Natural killer cell (primary cell): ENCODE measurements at regions of chr7 and their contacts with region 1.

Region 1: DNA sequence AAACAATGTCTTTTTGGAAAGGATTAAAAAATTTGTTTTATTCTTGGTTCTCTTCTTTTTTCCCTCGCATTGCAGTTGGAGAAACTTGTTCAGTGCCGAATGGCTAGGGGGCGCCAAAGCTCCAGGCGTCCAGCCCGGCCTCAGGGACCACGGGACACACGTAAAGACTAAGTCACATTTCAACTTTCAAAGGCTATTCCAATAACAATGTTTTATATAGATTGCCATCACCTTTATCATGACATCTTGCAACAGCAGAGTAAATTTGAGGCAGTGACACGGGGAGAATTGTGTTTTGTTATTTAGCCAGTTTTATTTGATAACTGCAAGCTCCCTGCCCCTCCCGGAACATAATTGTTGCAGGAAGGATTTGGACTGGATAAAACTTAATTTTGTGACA is 2.2 kb upstream of the IGFBP3 start:
- DNase-seq: peak in 1 of 2 donors; percentile 67
- ATAC-seq: peak in 1 of 3 donors; percentile 54
- H3K4me3 ChIP-seq: no peak overlapping the region
- H3K4me3 Mint-ChIP-seq: peak overlapping the region; percentile 62
- H3K27ac ChIP-seq: no peak overlapping the region
- H3K27ac Mint-ChIP-seq: no peak overlapping the region
- H3K4me1 ChIP-seq: peaks cover 14% of the 10 kb centered on the region
- H3K4me1 Mint-ChIP-seq: peaks cover 14 to 20% of the 10 kb centered on the region in 2 donors
- H3K27me3 ChIP-seq: peaks cover 21% of the 10 kb centered on the region
- H3K27me3 Mint-ChIP-seq: peaks cover 31 to 50% of the 10 kb centered on the region in 2 donors
- CTCF ChIP-seq: peak; percentile 60

Region 2: DNA sequence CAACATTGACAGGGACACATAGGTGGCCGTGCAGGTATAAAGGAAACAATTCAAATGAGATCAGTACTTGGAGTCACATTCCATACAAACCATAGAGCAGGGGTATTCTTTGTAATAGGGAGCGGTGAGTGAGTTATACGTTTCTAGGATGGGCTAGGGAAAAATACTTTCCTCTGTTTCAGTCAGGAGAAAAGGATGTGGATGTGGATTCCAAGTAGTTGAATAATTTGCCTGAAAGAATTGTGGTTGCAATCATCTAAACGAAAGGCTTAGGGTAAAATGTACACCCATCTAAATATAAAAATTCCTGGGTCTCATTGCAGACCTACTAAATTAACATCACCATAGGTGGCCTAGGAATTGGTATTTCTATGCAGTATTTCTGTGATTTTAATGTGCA is 268.5 kb after region 1 on chr7:
- intact Hi-C with region 1: no loop called
- DNase-seq: no peak
- ATAC-seq: no peak
- H3K4me3 ChIP-seq: no peak overlapping the region
- H3K4me3 Mint-ChIP-seq: no peak overlapping the region
- H3K27ac ChIP-seq: no peak overlapping the region
- H3K27ac Mint-ChIP-seq: no peak overlapping the region
- H3K4me1 ChIP-seq: no peaks in the 10 kb centered on the region
- H3K4me1 Mint-ChIP-seq: no peaks in the 10 kb centered on the region
- H3K27me3 ChIP-seq: no peaks in the 10 kb centered on the region
- H3K27me3 Mint-ChIP-seq: no peaks in the 10 kb centered on the region
- CTCF ChIP-seq: no peak

Region 3: GRCh38 chr7:46352004-46352954 is 429.0 kb after region 1 on chr7:
- intact Hi-C with region 1: loop called (anchors 2 kb)
- DNase-seq: peak in 1 of 2 donors; percentile 52
- ATAC-seq: peak in 1 of 3 donors; percentile 39
- H3K4me3 ChIP-seq: no peak overlapping the region
- H3K4me3 Mint-ChIP-seq: no peak overlapping the region
- H3K27ac ChIP-seq: no peak overlapping the region
- H3K27ac Mint-ChIP-seq: no peak overlapping the region
- H3K4me1 ChIP-seq: no peaks in the 10 kb centered on the region
- H3K4me1 Mint-ChIP-seq: no peaks in the 10 kb centered on the region
- H3K27me3 ChIP-seq: no peaks in the 10 kb centered on the region
- H3K27me3 Mint-ChIP-seq: peaks cover 0 to 3% of the 10 kb centered on the region in 2 donors
- CTCF ChIP-seq: peak; percentile 23